CD8-positive, alpha-beta T cell (primary cell): ENCODE measurements at regions of chr2 and their contacts with region 1.

Region 1: DNA sequence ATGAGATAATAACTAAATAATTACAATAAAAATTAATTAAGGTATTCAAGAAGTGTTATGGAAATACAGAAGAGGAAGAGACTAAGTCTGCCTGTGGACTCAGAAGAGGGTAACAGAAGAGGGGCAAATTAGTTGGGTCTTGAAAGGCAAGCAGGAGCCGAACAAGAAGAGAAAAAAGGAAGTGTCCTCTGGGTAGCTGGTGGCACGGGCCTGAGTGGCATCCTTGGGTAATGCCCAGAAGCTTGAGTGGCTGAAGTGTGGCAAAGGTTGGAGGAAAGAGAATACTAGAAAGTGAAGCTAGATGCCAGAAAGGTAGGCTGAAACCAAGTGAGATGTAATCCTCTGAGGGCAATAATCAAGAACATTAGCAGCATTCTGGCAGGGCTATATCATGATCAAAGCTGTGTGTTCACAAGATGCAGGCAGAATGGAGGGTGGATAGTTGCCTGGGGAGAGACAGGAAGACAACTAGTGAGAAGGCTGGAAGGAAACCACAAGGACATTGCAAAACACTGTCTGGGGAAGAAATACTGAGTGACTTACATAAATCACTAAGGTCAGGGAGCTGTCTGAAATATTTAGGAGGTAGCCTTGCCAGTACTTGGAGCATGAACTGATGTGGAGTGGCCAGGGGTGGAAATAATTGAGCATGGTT is 16.2 kb downstream of the DOCK10 start:
- DNase-seq: peak in 3 of 9 experiments; percentile 35 to 53 (median 39)
- ATAC-seq: peak; percentile 69
- H3K4me3 ChIP-seq: no peak overlapping the region
- H3K4me3 Mint-ChIP-seq: peak overlapping the region; percentile 12
- H3K27ac ChIP-seq: peak overlapping the region in 1 of 2 experiments; percentile 34
- H3K27ac Mint-ChIP-seq: peak overlapping the region; percentile 70
- H3K4me1 ChIP-seq: peaks cover 71% of the 10 kb centered on the region
- H3K4me1 Mint-ChIP-seq: peaks cover 85% of the 10 kb centered on the region
- H3K27me3 ChIP-seq: no peaks in the 10 kb centered on the region
- H3K27me3 Mint-ChIP-seq: no peaks in the 10 kb centered on the region
- CTCF ChIP-seq: no peak

Region 2: GRCh38 chr2:224990710-224991109 is 35.3 kb before region 1 on chr2:
- CTCF ChIA-PET with region 1: no interaction called
- POLR2A ChIA-PET with region 1: no interaction called
- intact Hi-C with region 1: no loop called
- DNase-seq: no peak
- ATAC-seq: no peak
- H3K4me3 ChIP-seq: no peak overlapping the region
- H3K4me3 Mint-ChIP-seq: no peak overlapping the region
- H3K27ac ChIP-seq: no peak overlapping the region
- H3K27ac Mint-ChIP-seq: peak overlapping the region; percentile 60
- H3K4me1 ChIP-seq: peaks cover 35% of the 10 kb centered on the region
- H3K4me1 Mint-ChIP-seq: peaks cover 91% of the 10 kb centered on the region
- H3K27me3 ChIP-seq: no peaks in the 10 kb centered on the region
- H3K27me3 Mint-ChIP-seq: no peaks in the 10 kb centered on the region
- CTCF ChIP-seq: no peak

Region 3: GRCh38 chr2:225008935-225009334 is 17.1 kb before region 1 on chr2:
- CTCF ChIA-PET with region 1: interaction called, 3 read pairs
- POLR2A ChIA-PET with region 1: interaction called, 3 read pairs
- intact Hi-C with region 1: loop called in 1 of 2 experiments (anchors 2 kb)
- DNase-seq: peak in 3 of 9 experiments; percentile 25 to 60 (median 46)
- ATAC-seq: no peak
- H3K4me3 ChIP-seq: no peak overlapping the region
- H3K4me3 Mint-ChIP-seq: no peak overlapping the region
- H3K27ac ChIP-seq: no peak overlapping the region
- H3K27ac Mint-ChIP-seq: peak overlapping the region; percentile 82
- H3K4me1 ChIP-seq: peaks cover 47% of the 10 kb centered on the region
- H3K4me1 Mint-ChIP-seq: peaks cover 93% of the 10 kb centered on the region
- H3K27me3 ChIP-seq: no peaks in the 10 kb centered on the region
- H3K27me3 Mint-ChIP-seq: no peaks in the 10 kb centered on the region
- CTCF ChIP-seq: peak; percentile 46